SK-N-SH (cell line): ENCODE measurements at regions of chr22 and their contacts with region 1.

Region 1: GRCh38 chr22:25772288-25772687 is 30.3 kb downstream of the MYO18B start:
- DNase-seq: no peak
- H3K4me3 ChIP-seq: no peak overlapping the region
- H3K27ac ChIP-seq: no peak overlapping the region
- H3K4me1 ChIP-seq: peaks cover 0 to 17% of the 10 kb centered on the region in 2 experiments; a peak in 1 of 4 replicates
- H3K27me3 ChIP-seq: no peaks in the 10 kb centered on the region
- CTCF ChIP-seq: no peak
- EP300 ChIP-seq: no peak
- RAD21 ChIP-seq: no peak

Region 2: GRCh38 chr22:25514436-25515180 is 257.7 kb before region 1 on chr22:
- CTCF ChIA-PET with region 1: no interaction called
- POLR2A ChIA-PET with region 1: no interaction called
- DNase-seq: no peak
- H3K4me3 ChIP-seq: no peak overlapping the region
- H3K27ac ChIP-seq: no peak overlapping the region
- H3K4me1 ChIP-seq: no peaks in the 10 kb centered on the region; a peak in 1 of 4 replicates
- H3K27me3 ChIP-seq: no peaks in the 10 kb centered on the region
- CTCF ChIP-seq: no peak
- EP300 ChIP-seq: no peak
- RAD21 ChIP-seq: no peak

Region 3: DNA sequence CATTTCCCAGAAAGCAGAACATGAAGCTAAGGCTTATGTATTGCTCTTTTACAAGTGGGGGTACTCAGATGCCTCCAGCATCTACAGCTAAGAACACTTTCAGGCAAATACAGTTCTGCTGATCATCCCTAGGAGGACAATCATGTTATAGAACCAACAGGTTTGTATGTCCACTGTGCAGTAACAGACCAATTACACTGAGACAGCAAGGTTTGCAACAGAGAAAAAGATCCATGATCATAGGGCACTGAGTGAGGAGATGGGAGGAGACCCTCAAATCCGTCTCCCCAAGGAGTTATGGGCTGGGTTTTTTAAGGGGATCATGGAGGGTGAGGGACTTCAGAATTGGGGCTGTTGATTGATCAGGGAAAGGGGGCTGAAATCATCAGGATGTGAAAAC is 246.9 kb before region 1 on chr22:
- CTCF ChIA-PET with region 1: no interaction called
- POLR2A ChIA-PET with region 1: no interaction called
- DNase-seq: no peak
- H3K4me3 ChIP-seq: no peak overlapping the region
- H3K27ac ChIP-seq: no peak overlapping the region
- H3K4me1 ChIP-seq: no peaks in the 10 kb centered on the region
- H3K27me3 ChIP-seq: no peaks in the 10 kb centered on the region
- CTCF ChIP-seq: no peak
- EP300 ChIP-seq: no peak
- RAD21 ChIP-seq: no peak

Region 4: DNA sequence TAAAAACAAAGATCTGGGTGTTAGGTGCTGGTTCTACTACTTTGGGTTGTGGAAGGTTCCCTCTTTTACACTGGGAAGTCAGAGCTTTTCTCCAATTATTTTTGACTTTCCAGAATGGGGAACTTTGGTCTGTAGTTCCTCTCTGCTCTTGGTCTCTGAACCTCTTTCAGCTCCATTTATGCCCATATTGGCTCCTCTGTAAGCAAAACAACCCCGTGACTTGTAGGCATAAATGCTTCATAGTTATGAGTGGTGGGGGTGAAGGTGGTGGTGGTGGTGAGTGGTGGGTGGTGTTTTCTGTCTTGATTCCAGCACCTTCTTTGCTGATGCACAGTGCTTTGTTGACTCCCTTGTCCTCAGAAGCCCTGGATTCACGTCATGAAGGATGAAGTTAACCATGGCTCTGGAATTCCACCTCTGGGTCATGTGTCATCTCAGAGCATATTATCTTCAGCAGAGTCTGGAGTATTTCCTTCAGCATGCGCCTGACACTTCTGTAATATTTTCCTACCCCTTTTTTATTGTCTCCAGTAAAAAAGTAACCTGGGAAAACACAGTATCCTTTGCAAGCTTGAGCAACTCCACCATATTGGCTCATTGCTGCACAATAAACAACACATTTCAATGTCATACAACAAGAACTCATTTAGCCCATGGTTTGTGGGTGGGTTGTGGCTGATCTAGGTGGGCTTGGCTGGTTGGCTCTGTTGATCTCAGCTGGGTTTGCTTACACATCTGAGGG is 232.0 kb before region 1 on chr22:
- CTCF ChIA-PET with region 1: interaction called, 17 read pairs
- POLR2A ChIA-PET with region 1: no interaction called
- DNase-seq: no peak
- H3K4me3 ChIP-seq: no peak overlapping the region
- H3K27ac ChIP-seq: no peak overlapping the region
- H3K4me1 ChIP-seq: no peaks in the 10 kb centered on the region; a peak in 2 of 4 replicates
- H3K27me3 ChIP-seq: no peaks in the 10 kb centered on the region
- CTCF ChIP-seq: no peak
- EP300 ChIP-seq: no peak
- RAD21 ChIP-seq: no peak

Region 5: GRCh38 chr22:25564320-25564978 is 207.8 kb before region 1 on chr22 and contains the start of gene GRK3:
- CTCF ChIA-PET with region 1: interaction called, 16 read pairs
- POLR2A ChIA-PET with region 1: no interaction called
- DNase-seq: peak; percentile 95
- H3K4me3 ChIP-seq: peak within 1 kb of the TSS; percentile 75 to 88
- H3K27ac ChIP-seq: peak within 1 kb of the TSS in 1 of 2 experiments; percentile 96; a peak in 2 of 4 replicates
- H3K4me1 ChIP-seq: peaks cover 5 to 16% of the 10 kb centered on the region in 2 experiments; a peak in 2 of 4 replicates
- H3K27me3 ChIP-seq: peaks cover 6% of the 10 kb centered on the region; the same call in 1 of the 2 replicates
- CTCF ChIP-seq: no peak
- EP300 ChIP-seq: no peak
- RAD21 ChIP-seq: no peak
- polyA plus RNA-seq, gene GRK3: 1.3 and 1.9 TPM in 2 replicates

Region 6: GRCh38 chr22:25747245-25747944 is 24.9 kb before region 1 on chr22:
- CTCF ChIA-PET with region 1: interaction called, 20 read pairs
- POLR2A ChIA-PET with region 1: no interaction called
- DNase-seq: peak; percentile 85
- H3K4me3 ChIP-seq: peak overlapping the region in 1 of 2 experiments; percentile 28; a peak in 2 of 4 replicates
- H3K27ac ChIP-seq: peak overlapping the region; percentile 87 to 97
- H3K4me1 ChIP-seq: peaks cover 12 to 46% of the 10 kb centered on the region in 2 experiments; a peak in 3 of 4 replicates
- H3K27me3 ChIP-seq: no peaks in the 10 kb centered on the region
- CTCF ChIP-seq: no peak
- EP300 ChIP-seq: peak; percentile 55 to 66; a peak in 2 of 4 replicates
- RAD21 ChIP-seq: no peak

Region 7: GRCh38 chr22:26325641-26326040 is 553.4 kb after region 1 on chr22:
- CTCF ChIA-PET with region 1: interaction called, 65 read pairs
- POLR2A ChIA-PET with region 1: no interaction called
- DNase-seq: no peak
- H3K4me3 ChIP-seq: no peak overlapping the region
- H3K27ac ChIP-seq: no peak overlapping the region
- H3K4me1 ChIP-seq: peaks cover 7 to 8% of the 10 kb centered on the region in 2 experiments; a peak in 2 of 4 replicates
- H3K27me3 ChIP-seq: no peaks in the 10 kb centered on the region
- CTCF ChIP-seq: no peak
- EP300 ChIP-seq: no peak
- RAD21 ChIP-seq: no peak